ENCODE measurements at regions of chr9 and their contacts with region 1.

Region 1: DNA sequence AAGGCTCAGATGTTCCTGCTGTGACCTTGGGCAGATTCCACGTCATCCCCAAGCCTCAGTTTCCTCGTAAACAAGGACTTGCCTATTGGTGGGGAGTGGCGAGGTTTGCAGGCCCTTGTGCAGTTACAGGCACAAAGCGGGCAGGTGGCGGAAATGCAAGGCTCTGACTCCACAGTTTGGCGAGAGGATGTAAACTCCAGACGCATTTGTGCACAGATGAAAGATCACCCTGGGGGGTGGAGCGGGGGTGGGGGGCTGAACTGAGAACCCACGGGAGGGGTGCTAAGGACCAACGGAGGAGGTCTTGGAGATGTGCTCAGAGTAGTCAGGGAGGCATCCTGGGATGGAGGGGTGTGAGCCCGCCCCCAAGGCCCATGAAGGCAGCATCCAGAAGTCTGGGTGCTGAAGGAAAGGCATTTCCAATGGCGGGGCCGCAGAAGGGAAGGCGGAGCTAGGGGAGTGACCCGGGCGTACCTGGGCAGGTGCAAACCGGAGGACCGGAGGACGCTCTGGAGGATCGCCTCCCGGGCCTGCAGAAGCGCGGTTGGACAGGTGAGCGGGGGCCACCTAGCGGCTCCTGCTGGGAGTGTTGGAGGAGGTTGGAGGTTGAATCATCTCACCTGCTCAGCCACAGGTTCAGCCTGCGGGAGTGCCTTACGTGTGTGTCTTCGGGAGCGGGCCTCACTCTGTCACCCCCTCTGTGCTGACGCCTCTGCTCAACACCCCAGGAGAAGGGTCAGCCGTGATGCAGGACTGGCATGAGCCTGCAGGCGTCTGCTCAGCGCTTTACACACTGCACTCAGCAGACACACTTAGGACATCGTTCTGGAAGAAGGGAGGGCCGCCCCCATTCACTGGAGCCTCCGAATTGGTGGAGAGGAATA is 1.9 kb upstream of the FIBCD1 start:
- DNase-seq: peak; percentile 93
- H3K4me3 ChIP-seq: no peak overlapping the region
- H3K27ac ChIP-seq: peak overlapping the region in 1 of 4 donors; percentile 84
- H3K4me1 ChIP-seq: peaks cover 4 to 40% (median 30%) of the 10 kb centered on the region in 4 donors
- H3K27me3 ChIP-seq: peaks cover 60% of the 10 kb centered on the region
- CTCF ChIP-seq: peak; percentile 84 to 89 (median 89)
- EP300 ChIP-seq: no peak
- POLR2A ChIP-seq: no peak

Region 2: DNA sequence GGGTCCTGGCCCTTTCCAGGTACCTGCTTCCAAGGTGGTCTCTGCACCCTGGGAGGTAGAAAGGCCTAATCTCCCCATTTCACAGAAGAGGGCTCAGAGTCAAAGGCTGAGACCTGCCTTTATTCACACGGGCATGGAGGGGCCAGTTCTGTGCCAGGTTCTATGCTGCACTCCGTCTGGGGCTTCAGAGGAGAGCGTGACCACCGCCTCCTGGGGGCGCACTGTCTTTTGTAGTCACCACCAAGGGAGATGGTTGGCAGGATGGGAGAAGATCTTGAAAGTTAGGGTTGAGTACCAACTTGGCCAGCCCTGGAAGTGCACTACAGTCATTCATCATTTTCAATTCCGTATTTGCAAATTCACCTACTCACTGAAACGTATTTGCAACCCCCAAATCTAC is 300.3 kb before region 1 on chr9:
- in situ Hi-C with region 1: no loop called
- intact Hi-C with region 1: no loop called
- DNase-seq: no peak
- H3K4me3 ChIP-seq: no peak overlapping the region
- H3K27ac ChIP-seq: no peak overlapping the region
- H3K4me1 ChIP-seq: no peaks in the 10 kb centered on the region
- H3K27me3 ChIP-seq: no peaks in the 10 kb centered on the region
- CTCF ChIP-seq: no peak
- EP300 ChIP-seq: no peak
- POLR2A ChIP-seq: no peak

Region 3: GRCh38 chr9:130701056-130702022 is 239.6 kb before region 1 on chr9:
- in situ Hi-C with region 1: loop called in 1 of 4 experiments (anchors 5 kb)
- intact Hi-C with region 1: loop called (anchors 5 kb)
- DNase-seq: peak; percentile 85
- H3K4me3 ChIP-seq: no peak overlapping the region
- H3K27ac ChIP-seq: peak overlapping the region in 3 of 4 donors; percentile 6 to 50 (median 23)
- H3K4me1 ChIP-seq: peaks cover 0 to 10% (median 3%) of the 10 kb centered on the region in 4 donors
- H3K27me3 ChIP-seq: no peaks in the 10 kb centered on the region
- CTCF ChIP-seq: peak; percentile 90 to 96 (median 94)
- EP300 ChIP-seq: no peak
- POLR2A ChIP-seq: no peak

Region 4: DNA sequence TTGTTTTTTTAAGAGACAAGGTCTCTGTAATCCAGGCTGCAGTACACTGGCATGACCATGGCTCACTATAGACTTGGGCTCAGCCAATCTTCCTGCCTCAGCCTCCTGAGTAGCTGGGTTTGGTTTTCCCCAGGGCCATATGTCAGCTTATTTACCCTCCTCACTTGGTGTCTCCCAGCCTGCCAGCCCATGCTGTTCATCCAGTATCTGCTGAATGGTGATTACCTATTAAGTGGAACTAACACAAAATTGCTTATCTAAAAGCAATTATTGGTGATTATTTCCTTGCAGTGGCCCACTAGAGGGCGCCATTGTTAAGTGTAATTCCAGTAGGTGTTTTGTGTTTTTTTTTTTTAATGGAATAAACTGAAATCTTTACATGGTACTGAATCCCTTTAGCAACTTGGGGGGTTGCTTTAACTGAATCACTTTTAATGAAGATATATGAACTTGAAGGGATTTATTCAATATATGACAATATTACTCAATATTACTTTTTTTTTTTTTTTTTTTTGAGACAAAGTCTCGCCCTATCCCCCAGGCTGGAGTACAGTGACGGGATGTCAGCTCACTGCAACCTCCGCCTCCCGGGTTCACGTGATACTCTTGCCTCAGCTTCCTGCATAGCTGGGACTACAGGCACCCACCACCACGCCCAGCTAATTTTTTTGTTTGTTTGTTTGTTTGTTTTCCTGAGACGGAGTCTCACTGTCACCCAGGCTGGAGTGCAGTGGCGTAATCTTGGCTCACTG is 233.5 kb before region 1 on chr9:
- in situ Hi-C with region 1: loop called in 1 of 4 experiments (anchors 5 kb)
- intact Hi-C with region 1: loop called (anchors 5 kb)
- DNase-seq: peak; percentile 76
- H3K4me3 ChIP-seq: no peak overlapping the region
- H3K27ac ChIP-seq: no peak overlapping the region
- H3K4me1 ChIP-seq: peaks cover 0 to 13% (median 11%) of the 10 kb centered on the region in 4 donors
- H3K27me3 ChIP-seq: no peaks in the 10 kb centered on the region
- CTCF ChIP-seq: peak; percentile 81 to 87 (median 87)
- EP300 ChIP-seq: no peak
- POLR2A ChIP-seq: no peak

Region 5: DNA sequence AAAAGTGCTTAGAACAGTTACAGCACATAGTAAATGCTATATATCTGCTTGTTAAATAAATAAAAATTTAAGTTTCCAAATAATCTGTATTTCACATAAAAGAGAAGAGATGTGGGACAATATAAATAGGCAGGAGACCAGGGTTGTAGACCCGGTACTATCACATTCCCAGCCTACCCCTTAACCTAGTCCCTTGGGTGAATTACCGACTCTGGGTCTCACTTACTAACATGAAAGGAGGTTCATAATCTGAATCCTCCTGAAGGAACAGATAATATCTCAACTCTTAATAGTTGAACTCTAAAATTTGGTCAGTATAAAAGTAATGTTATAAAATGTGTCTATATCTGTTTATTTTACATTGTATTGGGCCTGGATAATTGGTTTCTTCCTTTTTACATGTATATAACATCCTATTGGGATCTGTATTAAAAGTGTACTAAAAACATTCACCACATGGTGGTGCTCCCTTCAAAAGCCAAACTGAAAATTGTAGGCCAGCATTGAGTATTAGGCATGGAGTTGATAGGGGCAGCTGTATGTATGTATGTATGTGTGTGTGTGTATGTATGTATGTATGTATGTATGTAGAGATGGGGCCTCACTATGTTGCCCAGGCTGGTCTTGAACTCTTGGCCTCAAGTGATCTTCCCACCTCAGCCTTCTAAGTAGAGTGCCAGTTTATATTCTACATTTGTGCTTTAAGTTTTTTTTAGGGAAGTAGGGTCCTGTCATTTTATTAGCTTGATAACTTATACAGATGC is 170.1 kb before region 1 on chr9:
- in situ Hi-C with region 1: no loop called
- intact Hi-C with region 1: loop called (anchors 10 kb)
- DNase-seq: no peak
- H3K4me3 ChIP-seq: no peak overlapping the region
- H3K27ac ChIP-seq: peak overlapping the region; percentile 78 to 88 (median 84)
- H3K4me1 ChIP-seq: peaks cover 22 to 63% (median 47%) of the 10 kb centered on the region in 4 donors
- H3K27me3 ChIP-seq: no peaks in the 10 kb centered on the region
- CTCF ChIP-seq: peak; percentile 60 to 72 (median 62)
- EP300 ChIP-seq: no peak
- POLR2A ChIP-seq: no peak

Region 6: GRCh38 chr9:130866474-130866965 is 74.4 kb before region 1 on chr9:
- in situ Hi-C with region 1: loop called in 1 of 4 experiments (anchors 10 kb)
- intact Hi-C with region 1: loop called (anchors 1 kb)
- DNase-seq: peak; percentile 86
- H3K4me3 ChIP-seq: no peak overlapping the region
- H3K27ac ChIP-seq: peak overlapping the region in 1 of 4 donors; percentile 46
- H3K4me1 ChIP-seq: peaks cover 4 to 68% (median 29%) of the 10 kb centered on the region in 4 donors
- H3K27me3 ChIP-seq: no peaks in the 10 kb centered on the region
- CTCF ChIP-seq: peak; percentile 77 to 98 (median 90)
- EP300 ChIP-seq: no peak
- POLR2A ChIP-seq: no peak

Measured in transverse colon (tissue), 4 donors.